PC-9 (cell line): ENCODE measurements at regions of chr1 and their contacts with region 1.

Region 1: DNA sequence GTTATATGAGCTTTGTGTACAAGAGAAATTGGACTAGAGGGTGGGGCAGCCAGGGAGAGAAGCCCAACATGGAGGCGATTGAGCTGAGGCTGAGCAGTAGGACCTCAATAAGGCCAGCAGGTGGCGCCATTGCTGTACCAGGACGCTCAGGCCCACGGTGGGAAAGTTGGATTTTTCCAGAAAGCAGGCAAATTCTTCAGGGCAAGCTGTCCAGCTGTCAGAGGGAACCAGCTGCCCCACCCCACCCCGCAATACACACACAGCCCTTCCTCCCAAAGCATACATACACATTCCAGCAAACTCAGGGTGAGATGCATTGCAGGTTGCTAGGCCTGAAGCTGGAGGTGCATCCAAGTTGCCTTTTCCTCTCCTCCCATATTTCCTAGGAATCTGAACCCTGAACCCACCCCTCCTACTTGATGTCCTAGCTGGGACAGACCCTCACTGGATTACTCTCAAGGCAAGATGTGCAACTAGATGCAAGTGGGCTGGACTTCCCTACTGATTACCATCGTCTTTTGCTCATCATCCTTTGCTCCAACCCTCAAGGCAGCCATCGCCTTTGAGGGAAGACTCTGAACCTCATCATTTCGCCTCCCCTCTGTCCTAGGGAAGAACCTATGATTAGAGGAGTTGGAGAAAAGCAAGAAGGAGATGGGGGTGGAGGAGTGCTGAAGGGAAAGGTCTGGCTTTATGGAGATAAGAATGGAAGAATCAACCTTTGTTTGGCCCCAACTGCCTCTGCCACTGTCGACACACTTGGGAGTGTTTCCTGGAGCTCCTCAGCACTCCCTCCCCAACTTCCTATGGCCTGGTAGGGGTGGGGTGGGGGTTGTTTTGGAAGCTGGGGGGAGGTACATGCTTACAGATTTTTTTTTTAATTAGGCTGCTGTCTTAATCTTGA is 25.5 kb downstream of the CD34 start:
- DNase-seq: peak; percentile 50 to 53
- H3K4me3 ChIP-seq: no peak overlapping the region
- H3K27ac ChIP-seq: no peak overlapping the region
- H3K4me1 ChIP-seq: no peaks in the 10 kb centered on the region
- H3K27me3 ChIP-seq: peaks cover 6% of the 10 kb centered on the region
- CTCF ChIP-seq: peak; percentile 91

Region 2: DNA sequence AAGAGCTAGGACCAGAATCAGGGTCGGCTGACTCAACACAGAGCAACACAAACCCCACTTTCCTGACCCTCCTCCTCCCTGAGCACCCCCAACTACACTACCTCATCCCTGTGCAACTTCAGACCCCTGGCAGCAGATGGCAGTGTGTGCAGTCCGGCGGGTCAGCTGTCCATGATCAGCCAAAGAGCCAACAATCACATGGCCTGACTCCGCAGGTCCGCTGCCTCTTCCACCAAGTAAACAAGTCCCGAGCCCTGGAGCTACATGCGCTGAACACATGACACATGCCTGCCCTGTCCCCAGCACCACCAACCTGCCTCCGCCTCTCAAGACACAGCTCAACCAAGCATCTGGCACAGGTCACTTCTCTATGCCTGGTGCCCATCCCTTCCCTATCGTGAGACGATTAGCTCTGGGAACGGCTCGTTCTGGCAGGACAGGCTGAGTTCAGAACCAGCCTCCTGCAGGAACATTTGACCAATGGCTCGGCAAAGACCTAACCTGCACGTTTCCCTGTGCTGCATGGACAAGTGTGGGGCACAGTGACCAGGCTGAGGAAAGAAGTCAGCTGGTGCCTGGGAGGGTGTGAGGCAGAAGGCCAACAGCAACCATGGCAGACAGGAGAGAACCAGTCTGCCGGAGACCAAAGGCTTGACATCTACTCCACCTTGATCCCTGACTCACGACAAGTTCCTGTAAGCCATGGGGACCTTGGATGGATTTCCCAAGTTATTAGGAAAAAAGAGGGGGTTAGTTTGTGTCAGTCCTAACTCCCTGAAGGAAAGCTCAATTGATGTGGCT is 73.3 kb before region 1 on chr1:
- CTCF ChIA-PET with region 1: interaction called, 10 read pairs
- POLR2A ChIA-PET with region 1: no interaction called
- intact Hi-C with region 1: no loop called
- DNase-seq: no peak
- H3K4me3 ChIP-seq: no peak overlapping the region
- H3K27ac ChIP-seq: no peak overlapping the region
- H3K4me1 ChIP-seq: no peaks in the 10 kb centered on the region
- H3K27me3 ChIP-seq: no peaks in the 10 kb centered on the region
- CTCF ChIP-seq: peak; percentile 49

Region 3: DNA sequence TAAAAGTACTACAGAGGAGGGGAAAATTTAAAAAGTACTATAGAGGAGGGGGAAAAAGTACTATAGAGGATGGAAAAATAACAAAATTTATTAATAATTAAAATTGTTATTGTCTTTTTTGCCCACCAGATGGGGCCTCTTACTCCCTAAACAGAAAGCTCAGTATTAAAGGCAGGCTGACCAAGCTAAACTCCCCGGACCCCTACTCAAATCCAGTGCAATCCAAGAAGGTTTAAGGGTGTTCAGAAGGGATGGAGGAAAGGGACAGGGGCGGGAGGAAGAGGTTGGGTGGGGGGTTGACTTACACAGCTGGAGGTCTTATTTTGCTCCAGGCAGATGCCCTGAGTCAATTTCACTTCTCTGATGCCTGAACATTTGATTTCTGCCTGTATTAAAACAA is 11.8 kb after region 1 on chr1:
- CTCF ChIA-PET with region 1: interaction called, 10 read pairs
- POLR2A ChIA-PET with region 1: no interaction called
- intact Hi-C with region 1: no loop called
- DNase-seq: no peak
- H3K4me3 ChIP-seq: no peak overlapping the region
- H3K27ac ChIP-seq: no peak overlapping the region
- H3K4me1 ChIP-seq: no peaks in the 10 kb centered on the region
- H3K27me3 ChIP-seq: peaks cover 4% of the 10 kb centered on the region; the same call in 1 of the 2 replicates
- CTCF ChIP-seq: peak; percentile 65

Region 4: DNA sequence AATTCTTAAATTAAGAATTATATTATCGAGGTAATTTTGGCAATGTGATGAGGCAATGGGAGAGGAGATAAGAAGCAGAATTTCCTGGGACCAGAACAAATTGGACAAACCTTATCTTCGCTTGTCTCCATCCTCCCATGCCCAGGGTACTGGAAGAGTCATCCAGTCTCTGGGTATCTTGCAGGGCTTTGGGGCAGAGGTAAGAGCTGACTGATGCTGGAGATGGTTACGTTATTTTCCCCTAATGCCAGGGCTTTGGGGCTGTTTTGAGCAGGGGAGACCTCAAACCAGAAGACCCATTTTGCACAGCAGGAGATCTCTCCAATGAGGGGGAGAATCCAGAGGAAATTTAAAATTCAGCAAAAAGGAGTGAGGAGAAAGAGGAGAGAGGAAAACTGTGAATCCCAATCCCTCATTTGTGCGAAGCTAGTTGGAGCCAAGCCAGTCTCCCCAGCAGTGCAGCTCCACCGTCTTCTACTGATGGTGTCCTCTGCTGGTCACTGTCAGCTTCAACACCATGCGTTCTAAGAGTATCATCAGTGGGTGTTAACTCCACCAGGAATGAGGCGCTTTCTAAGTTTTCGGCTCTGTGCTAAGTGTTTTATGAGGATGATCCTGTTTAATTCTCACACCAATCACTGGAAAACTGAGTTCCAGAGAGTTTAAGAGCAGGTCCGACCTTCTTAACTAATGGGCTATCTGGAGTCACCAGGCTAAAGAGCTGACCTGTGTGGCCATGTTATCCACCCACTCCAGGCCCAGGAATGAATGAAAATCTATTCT is 112.3 kb after region 1 on chr1:
- CTCF ChIA-PET with region 1: no interaction called
- POLR2A ChIA-PET with region 1: no interaction called
- intact Hi-C with region 1: loop called (anchors 10 kb)
- DNase-seq: peak in 1 of 2 experiments; percentile 45
- H3K4me3 ChIP-seq: no peak overlapping the region
- H3K27ac ChIP-seq: no peak overlapping the region
- H3K4me1 ChIP-seq: no peaks in the 10 kb centered on the region
- H3K27me3 ChIP-seq: peaks cover 25% of the 10 kb centered on the region
- CTCF ChIP-seq: peak; percentile 78